ENCODE measurements at regions of chr2 and their contacts with region 1.

Region 1: GRCh38 chr2:10408649-10409579 is 39.2 kb downstream of the ODC1 start:
- DNase-seq: peak; percentile 79 to 81 (median 80)
- H3K4me3 ChIP-seq: peak overlapping the region in 1 of 2 donors; percentile 22
- H3K4me3 Mint-ChIP-seq: peak overlapping the region; percentile 79 to 94 (median 86)
- H3K27ac ChIP-seq: peak overlapping the region; percentile 48
- H3K27ac Mint-ChIP-seq: peak overlapping the region; percentile 83 to 97 (median 95)
- H3K4me1 ChIP-seq: peaks cover 41% of the 10 kb centered on the region
- H3K4me1 Mint-ChIP-seq: peaks cover 30 to 44% (median 33%) of the 10 kb centered on the region in 4 donors
- H3K27me3 ChIP-seq: no peaks in the 10 kb centered on the region
- H3K27me3 Mint-ChIP-seq: no peaks in the 10 kb centered on the region

Region 2: GRCh38 chr2:10122386-10123280 is 286.3 kb before region 1 on chr2 and contains the start of gene RRM2:
- CTCF ChIA-PET with region 1: interaction called, 159 read pairs
- POLR2A ChIA-PET with region 1: interaction called, 25 read pairs
- intact Hi-C with region 1: loop called (anchors 1 kb)
- DNase-seq: peak; percentile 81 to 87 (median 85)
- H3K4me3 ChIP-seq: peak within 1 kb of the TSS; percentile 32 to 50
- H3K4me3 Mint-ChIP-seq: peak within 1 kb of the TSS; percentile 89 to 99 (median 98)
- H3K27ac ChIP-seq: no peak within 1 kb of the TSS
- H3K27ac Mint-ChIP-seq: peak within 1 kb of the TSS; percentile 51 to 91 (median 58)
- H3K4me1 ChIP-seq: peaks cover 52% of the 10 kb centered on the region
- H3K4me1 Mint-ChIP-seq: peaks cover 32 to 56% (median 42%) of the 10 kb centered on the region in 4 donors
- H3K27me3 ChIP-seq: peaks cover 5% of the 10 kb centered on the region
- H3K27me3 Mint-ChIP-seq: peaks cover 5 to 12% of the 10 kb centered on the region in 2 donors
- total RNA-seq, gene RRM2: 0.42 TPM in 1 of 2 experiments, not detected in the other

Region 3: DNA sequence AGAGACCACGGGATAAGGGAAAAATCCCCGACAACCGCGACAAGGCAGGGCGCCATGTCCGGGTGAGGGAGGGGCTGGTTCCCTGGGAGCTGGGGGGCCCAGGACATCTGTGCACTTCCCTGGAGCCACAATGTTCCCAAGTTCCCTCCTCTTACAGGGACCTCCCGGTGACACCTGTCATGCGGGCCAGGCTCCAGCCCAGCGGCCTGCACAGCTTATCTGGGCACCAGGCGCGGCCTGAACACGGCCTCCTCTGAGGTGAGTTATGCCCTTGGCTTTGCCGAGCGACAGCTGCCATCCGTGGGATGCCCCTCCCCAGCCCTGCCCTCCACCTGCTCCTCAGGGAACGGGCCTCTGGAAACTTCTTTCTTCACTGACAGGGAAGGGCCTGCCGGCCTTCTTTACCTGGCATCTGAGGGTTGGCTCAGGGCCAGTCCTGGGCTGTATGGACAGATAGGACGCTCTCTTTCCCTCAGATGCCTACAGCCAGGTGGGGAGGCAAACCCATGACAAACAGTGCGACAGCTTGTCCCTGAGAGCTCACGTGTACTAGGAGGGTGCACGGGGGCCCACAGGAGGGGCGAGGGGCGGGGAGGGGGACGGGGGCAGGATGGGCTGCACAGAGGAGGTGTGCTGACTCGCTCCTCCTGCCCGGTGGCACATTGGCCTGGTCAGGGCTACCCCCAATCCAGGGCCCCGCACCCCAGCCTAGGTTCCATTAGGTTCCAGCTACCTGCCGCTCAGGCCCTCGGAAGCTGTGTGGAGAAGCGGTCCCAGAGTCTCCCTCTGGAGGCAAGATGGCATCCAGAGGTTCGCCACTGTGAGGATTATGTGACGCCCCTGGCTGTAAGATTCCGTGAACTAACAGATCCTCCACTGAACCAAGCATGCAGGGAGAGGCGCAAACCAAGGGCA is 141.1 kb before region 1 on chr2:
- CTCF ChIA-PET with region 1: interaction called, 103 read pairs
- POLR2A ChIA-PET with region 1: interaction called, 31 read pairs
- intact Hi-C with region 1: loop called (anchors 1 kb)
- DNase-seq: no peak
- H3K4me3 ChIP-seq: no peak overlapping the region
- H3K4me3 Mint-ChIP-seq: no peak overlapping the region
- H3K27ac ChIP-seq: no peak overlapping the region
- H3K27ac Mint-ChIP-seq: no peak overlapping the region
- H3K4me1 ChIP-seq: peaks cover 7% of the 10 kb centered on the region
- H3K4me1 Mint-ChIP-seq: peaks cover 1 to 7% (median 4%) of the 10 kb centered on the region in 4 donors
- H3K27me3 ChIP-seq: no peaks in the 10 kb centered on the region
- H3K27me3 Mint-ChIP-seq: no peaks in the 10 kb centered on the region

Region 4: DNA sequence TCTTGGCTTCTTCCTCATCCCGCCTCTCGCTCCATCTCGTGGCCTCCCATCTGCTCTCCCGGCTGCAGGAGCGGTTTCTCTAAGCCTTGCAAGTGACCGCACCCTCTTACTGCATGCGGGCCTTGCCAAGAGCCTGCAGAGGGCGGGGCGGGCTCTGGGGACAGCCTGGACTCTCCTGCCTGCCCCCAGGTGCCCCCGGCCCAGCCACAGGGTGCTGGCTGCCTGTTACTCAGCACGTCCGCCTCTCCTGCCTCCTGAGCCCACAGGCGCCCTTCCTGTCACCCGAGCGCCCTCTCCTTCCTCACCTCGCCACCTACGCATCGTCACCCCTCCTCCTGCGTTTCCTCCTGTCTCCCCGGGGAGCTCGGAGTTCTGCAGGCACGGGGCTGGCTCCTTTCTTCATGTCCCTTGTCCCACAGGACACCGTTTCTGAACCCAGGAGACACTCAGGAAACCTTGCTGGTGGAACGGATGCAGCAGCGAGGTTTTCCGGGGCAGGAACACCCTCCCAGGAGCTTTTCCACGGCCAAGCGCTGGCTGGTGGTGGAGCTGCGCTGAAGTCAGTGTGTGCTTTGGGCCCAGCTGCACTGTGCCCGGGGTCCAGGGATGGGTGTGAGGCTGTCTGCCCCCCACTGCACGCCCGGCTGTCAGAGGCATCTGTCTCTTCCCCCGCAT is 77.8 kb before region 1 on chr2:
- CTCF ChIA-PET with region 1: interaction called, 75 read pairs
- POLR2A ChIA-PET with region 1: interaction called, 24 read pairs
- intact Hi-C with region 1: loop called (anchors 1 kb)
- DNase-seq: peak; percentile 63 to 86 (median 70)
- H3K4me3 ChIP-seq: peak overlapping the region; percentile 67 to 68
- H3K4me3 Mint-ChIP-seq: peak overlapping the region; percentile 89 to 96 (median 94)
- H3K27ac ChIP-seq: peak overlapping the region; percentile 81
- H3K27ac Mint-ChIP-seq: peak overlapping the region; percentile 89 to 98 (median 95)
- H3K4me1 ChIP-seq: peaks cover 79% of the 10 kb centered on the region
- H3K4me1 Mint-ChIP-seq: peaks cover 54 to 89% (median 75%) of the 10 kb centered on the region in 4 donors
- H3K27me3 ChIP-seq: no peaks in the 10 kb centered on the region
- H3K27me3 Mint-ChIP-seq: no peaks in the 10 kb centered on the region

Region 5: DNA sequence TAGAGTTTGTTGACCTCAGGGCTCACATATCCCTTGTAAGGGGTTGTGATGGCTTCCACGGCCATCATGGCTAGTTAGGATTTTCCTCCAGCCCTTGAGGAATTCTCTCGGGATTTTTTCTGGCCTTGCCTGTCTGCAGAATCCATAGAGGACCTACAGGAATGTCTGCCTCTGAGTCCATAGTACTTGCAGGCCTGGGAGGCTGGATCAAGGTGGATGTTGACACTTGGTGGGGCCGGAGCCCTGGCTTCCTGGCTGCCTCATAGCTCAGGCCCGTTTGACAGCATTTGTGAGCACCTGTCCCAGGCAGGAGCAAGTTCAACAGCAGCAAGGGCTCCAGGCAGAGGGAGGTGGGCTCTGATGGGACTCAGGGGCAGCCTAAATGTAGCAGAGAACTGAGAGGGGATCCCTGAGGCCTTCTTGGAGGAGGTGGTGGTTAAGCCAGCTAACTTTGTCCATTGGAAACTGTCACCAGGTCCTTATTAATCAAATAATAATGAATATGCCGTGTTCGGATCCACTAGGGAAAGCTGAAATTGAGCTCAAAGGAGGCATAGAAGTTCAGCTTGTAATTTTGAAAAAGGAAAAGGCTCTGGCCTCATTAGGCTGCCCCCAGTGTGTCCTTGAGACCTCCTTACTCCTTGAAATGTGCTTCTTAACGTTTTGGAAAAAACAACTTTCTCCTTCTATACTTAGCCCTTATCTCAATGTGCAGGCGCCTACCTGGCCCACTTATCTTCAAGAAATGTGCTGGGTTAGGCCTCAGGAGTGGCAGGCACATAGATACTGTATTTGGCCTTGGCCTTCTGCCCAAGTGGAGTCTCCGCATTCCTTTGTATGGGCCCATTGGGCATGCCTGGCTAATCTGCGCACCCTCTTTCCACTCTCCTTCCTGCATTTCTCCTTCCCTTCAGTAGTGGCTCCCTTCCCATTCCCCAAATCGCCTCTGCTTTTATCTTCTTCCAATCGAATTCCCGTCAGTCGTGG is 39.4 kb before region 1 on chr2:
- CTCF ChIA-PET with region 1: interaction called, 7 read pairs
- POLR2A ChIA-PET with region 1: no interaction called
- intact Hi-C with region 1: loop called (anchors 5 kb)
- DNase-seq: no peak
- H3K4me3 ChIP-seq: no peak overlapping the region
- H3K4me3 Mint-ChIP-seq: no peak overlapping the region
- H3K27ac ChIP-seq: no peak overlapping the region
- H3K27ac Mint-ChIP-seq: peak overlapping the region in 4 of 7 donors; percentile 4 to 70 (median 34)
- H3K4me1 ChIP-seq: peaks cover 30% of the 10 kb centered on the region
- H3K4me1 Mint-ChIP-seq: peaks cover 13 to 71% (median 46%) of the 10 kb centered on the region in 4 donors
- H3K27me3 ChIP-seq: no peaks in the 10 kb centered on the region
- H3K27me3 Mint-ChIP-seq: no peaks in the 10 kb centered on the region

Region 6: DNA sequence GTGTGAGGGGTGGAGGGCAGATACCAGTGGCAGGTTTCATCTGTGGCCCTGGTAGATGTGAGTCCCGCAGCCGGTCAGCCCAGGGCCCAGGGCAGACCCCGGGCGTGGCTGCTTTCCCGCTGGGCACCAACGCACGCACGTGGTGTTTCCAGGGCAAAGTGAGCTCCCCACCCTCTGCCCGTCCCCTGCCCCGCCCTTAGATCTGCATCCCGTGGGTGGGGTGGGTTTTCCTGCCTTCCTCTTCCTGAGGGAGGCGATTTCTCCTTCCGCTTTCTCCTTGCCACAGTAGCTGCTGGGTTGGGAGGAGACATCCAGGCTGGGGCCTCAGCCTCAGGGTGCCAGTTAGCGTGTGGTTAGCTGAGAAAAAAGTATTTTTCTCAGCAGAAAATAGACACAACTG is 10.4 kb before region 1 on chr2:
- CTCF ChIA-PET with region 1: interaction called, 28 read pairs
- POLR2A ChIA-PET with region 1: no interaction called
- intact Hi-C with region 1: no loop called
- DNase-seq: no peak
- H3K4me3 ChIP-seq: no peak overlapping the region
- H3K4me3 Mint-ChIP-seq: no peak overlapping the region
- H3K27ac ChIP-seq: no peak overlapping the region
- H3K27ac Mint-ChIP-seq: peak overlapping the region in 5 of 7 donors; percentile 46 to 83 (median 72)
- H3K4me1 ChIP-seq: peaks cover 24% of the 10 kb centered on the region
- H3K4me1 Mint-ChIP-seq: peaks cover 23 to 52% (median 35%) of the 10 kb centered on the region in 4 donors
- H3K27me3 ChIP-seq: no peaks in the 10 kb centered on the region
- H3K27me3 Mint-ChIP-seq: no peaks in the 10 kb centered on the region

Region 7: DNA sequence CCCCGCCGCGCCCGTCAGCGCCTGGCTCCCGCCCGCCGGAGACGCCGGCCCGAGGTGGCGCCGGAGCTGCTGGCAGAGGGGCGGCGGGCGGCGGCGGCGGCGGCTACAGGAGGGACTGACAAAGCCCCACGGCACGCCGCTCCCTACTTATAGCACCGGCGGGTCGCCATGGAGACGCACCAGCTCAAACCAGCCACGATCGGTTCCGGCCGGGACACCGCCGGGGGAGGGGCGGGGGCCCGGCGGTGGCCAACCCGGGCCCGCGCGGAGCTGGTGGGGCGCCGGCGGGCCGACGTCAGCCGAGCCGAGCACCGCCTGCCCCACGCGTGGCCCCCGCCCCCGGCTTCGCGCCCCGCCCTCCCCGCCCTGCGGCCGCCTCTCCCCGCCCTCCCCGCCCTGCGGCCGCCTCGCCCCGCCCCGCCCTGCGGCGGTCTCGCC is 39.3 kb after region 1 on chr2 and contains the start of gene ODC1:
- CTCF ChIA-PET with region 1: interaction called, 8 read pairs
- POLR2A ChIA-PET with region 1: interaction called, 18 read pairs
- intact Hi-C with region 1: no loop called
- DNase-seq: peak; percentile 97 to 99 (median 98)
- H3K4me3 ChIP-seq: peak within 1 kb of the TSS; percentile 47 to 90
- H3K4me3 Mint-ChIP-seq: peak within 1 kb of the TSS; percentile 86 to 95 (median 90)
- H3K27ac ChIP-seq: peak within 1 kb of the TSS; percentile 86
- H3K27ac Mint-ChIP-seq: peak within 1 kb of the TSS; percentile 88 to 96 (median 93)
- H3K4me1 ChIP-seq: peaks cover 42% of the 10 kb centered on the region
- H3K4me1 Mint-ChIP-seq: peaks cover 17 to 57% (median 41%) of the 10 kb centered on the region in 4 donors
- H3K27me3 ChIP-seq: no peaks in the 10 kb centered on the region
- H3K27me3 Mint-ChIP-seq: no peaks in the 10 kb centered on the region
- total RNA-seq, gene ODC1: 32.5 to 35.4 TPM

Region 8: DNA sequence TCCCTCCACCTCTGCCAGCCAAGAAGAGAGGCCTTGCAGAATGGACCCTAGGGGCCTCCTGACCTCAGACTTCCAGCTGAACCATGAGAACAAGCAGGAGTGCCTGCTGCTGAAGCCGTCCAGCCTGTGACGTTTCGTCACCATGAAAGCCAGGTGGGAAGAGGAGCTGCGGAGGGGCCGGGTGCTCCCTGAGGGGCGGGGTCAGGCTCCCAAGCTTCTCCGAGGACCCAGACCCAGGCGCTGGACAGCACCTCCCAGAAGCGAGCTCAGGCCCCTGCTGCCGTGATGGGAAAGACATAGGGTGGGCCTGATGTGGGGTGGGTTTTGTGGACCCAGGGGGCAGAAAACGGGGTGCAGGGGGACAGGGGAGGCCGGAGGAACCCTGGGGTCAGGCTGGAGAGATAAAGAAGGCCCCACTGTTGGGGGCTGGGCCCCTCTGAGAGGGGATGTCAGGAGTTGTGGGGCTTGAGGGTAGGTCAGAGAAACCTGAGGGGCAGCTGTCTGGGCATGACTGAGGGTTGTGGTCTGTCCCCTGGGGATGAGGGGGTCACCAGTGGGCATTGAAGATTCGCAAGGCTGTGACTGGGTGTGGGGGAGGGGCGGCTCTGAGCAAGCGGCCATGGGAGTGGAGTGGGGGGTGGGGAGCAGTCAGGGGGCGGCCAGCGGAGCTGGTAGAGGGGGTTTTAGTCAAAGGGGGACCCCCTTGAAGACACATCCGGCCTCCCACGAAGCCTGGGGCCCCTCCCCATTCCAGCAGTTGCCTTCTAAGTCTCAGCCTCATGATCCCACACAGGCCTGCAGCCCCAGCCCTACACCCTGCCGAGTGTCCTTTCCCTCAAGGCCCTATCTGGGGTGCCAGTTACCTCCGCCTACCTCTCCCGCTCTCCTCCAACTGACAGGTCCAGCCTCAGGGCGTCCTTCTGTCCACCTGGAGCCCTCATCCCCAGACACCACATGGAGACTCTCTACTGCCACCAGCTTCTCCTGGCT is 112.7 kb after region 1 on chr2:
- CTCF ChIA-PET with region 1: no interaction called
- POLR2A ChIA-PET with region 1: no interaction called
- intact Hi-C with region 1: no loop called
- DNase-seq: no peak
- H3K4me3 ChIP-seq: no peak overlapping the region
- H3K4me3 Mint-ChIP-seq: no peak overlapping the region
- H3K27ac ChIP-seq: no peak overlapping the region
- H3K27ac Mint-ChIP-seq: peak overlapping the region in 1 of 7 donors; percentile 48
- H3K4me1 ChIP-seq: no peaks in the 10 kb centered on the region
- H3K4me1 Mint-ChIP-seq: no peaks in the 10 kb centered on the region
- H3K27me3 ChIP-seq: no peaks in the 10 kb centered on the region
- H3K27me3 Mint-ChIP-seq: no peaks in the 10 kb centered on the region